ENCODE measurements at regions of chr19 and their contacts with region 1.

Region 1: DNA sequence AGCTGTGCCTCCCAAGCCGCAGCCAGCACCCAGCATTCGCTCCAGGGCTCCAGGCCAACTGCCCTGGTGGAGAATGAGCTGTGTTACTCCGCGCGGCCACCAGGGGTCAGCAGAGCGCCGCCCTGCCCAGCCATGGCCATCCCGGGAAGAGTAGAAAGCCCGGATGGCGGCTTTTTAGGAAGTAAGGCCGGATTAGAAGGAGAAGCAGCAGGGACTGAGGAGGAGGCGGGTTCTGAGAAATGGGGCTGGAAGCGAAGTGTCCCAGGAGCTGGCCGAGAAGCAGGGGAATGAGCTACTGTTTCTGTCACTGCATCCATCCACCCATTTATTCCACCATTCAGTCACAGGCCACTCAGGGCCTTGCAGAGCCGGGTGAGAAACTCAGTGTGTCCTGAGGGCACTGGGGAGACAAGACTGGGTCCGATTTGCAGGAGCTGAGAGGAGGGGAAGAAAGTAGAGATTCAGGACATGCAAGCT is 6.6 kb upstream of the NPAS1 start:
- DNase-seq: peak in 30 of 35 experiments; percentile 20 to 77 (median 46)
- ATAC-seq: peak; percentile 72 to 93 (median 80)
- H3K4me3 ChIP-seq: no peak overlapping the region
- H3K4me3 Mint-ChIP-seq: peak overlapping the region in 1 of 3 donors; percentile 1
- H3K27ac ChIP-seq: no peak overlapping the region
- H3K27ac Mint-ChIP-seq: no peak overlapping the region
- H3K4me1 ChIP-seq: peaks cover 0 to 7% of the 10 kb centered on the region in 2 experiments
- H3K4me1 Mint-ChIP-seq: peaks cover 7 to 10% (median 9%) of the 10 kb centered on the region in 3 donors
- H3K27me3 ChIP-seq: peaks cover 0 to 28% of the 10 kb centered on the region in 2 experiments
- H3K27me3 Mint-ChIP-seq: peaks cover 4 to 15% of the 10 kb centered on the region in 2 donors

Region 2: GRCh38 chr19:46932346-46932745 is 80.7 kb before region 1 on chr19:
- CTCF ChIA-PET with region 1: no interaction called
- POLR2A ChIA-PET with region 1: no interaction called
- DNase-seq: no peak
- ATAC-seq: no peak
- H3K4me3 ChIP-seq: no peak overlapping the region
- H3K4me3 Mint-ChIP-seq: no peak overlapping the region
- H3K27ac ChIP-seq: no peak overlapping the region
- H3K27ac Mint-ChIP-seq: peak overlapping the region; percentile 90 to 93
- H3K4me1 ChIP-seq: peaks cover 9 to 51% of the 10 kb centered on the region in 2 experiments
- H3K4me1 Mint-ChIP-seq: peaks cover 62 to 82% (median 73%) of the 10 kb centered on the region in 3 donors
- H3K27me3 ChIP-seq: no peaks in the 10 kb centered on the region
- H3K27me3 Mint-ChIP-seq: no peaks in the 10 kb centered on the region

Region 3: GRCh38 chr19:47035127-47036096 is 22.3 kb after region 1 on chr19:
- CTCF ChIA-PET with region 1: interaction called, 3 to 13 read pairs
- POLR2A ChIA-PET with region 1: no interaction called
- DNase-seq: peak; percentile 82 to 100 (median 92)
- ATAC-seq: peak; percentile 92 to 99 (median 95)
- H3K4me3 ChIP-seq: peak overlapping the region; percentile 49 to 59
- H3K4me3 Mint-ChIP-seq: peak overlapping the region; percentile 84 to 87 (median 87)
- H3K27ac ChIP-seq: peak overlapping the region; percentile 3
- H3K27ac Mint-ChIP-seq: peak overlapping the region; percentile 73 to 75
- H3K4me1 ChIP-seq: peaks cover 6 to 27% of the 10 kb centered on the region in 2 experiments
- H3K4me1 Mint-ChIP-seq: peaks cover 18 to 29% (median 21%) of the 10 kb centered on the region in 3 donors
- H3K27me3 ChIP-seq: peaks cover 2 to 47% of the 10 kb centered on the region in 2 experiments
- H3K27me3 Mint-ChIP-seq: peaks cover 9 to 21% of the 10 kb centered on the region in 2 donors

Measured in T-cell (primary cell).